Gastrocnemius medialis (tissue), 4 donors: ENCODE measurements at regions of chr3 and their contacts with region 1.

Region 1: GRCh38 chr3:111859974-111860859 is 1.2 kb downstream of the PHLDB2 start:
- DNase-seq: peak; percentile 53 to 55
- ATAC-seq: peak; percentile 80 to 82
- H3K4me3 ChIP-seq: peak overlapping the region; percentile 57 to 73 (median 66)
- H3K27ac ChIP-seq: peak overlapping the region; percentile 77 to 86 (median 81)
- H3K4me1 ChIP-seq: peaks cover 0 to 23% of the 10 kb centered on the region in 2 donors
- H3K27me3 ChIP-seq: peaks cover 25 to 46% (median 39%) of the 10 kb centered on the region in 3 donors
- CTCF ChIP-seq: peak in 4 of 5 experiments; percentile 27 to 53 (median 48)
- POLR2A ChIP-seq: peak; percentile 37 to 61

Region 2: GRCh38 chr3:111717601-111718000 is 142.6 kb before region 1 on chr3:
- in situ Hi-C with region 1: loop called in 1 of 4 experiments (anchors 10 kb)
- intact Hi-C with region 1: loop called (anchors 1 kb)
- DNase-seq: peak; percentile 54 to 73
- ATAC-seq: peak; percentile 98 to 99
- H3K4me3 ChIP-seq: no peak overlapping the region
- H3K27ac ChIP-seq: no peak overlapping the region
- H3K4me1 ChIP-seq: peaks cover 0 to 3% of the 10 kb centered on the region in 2 donors
- H3K27me3 ChIP-seq: no peaks in the 10 kb centered on the region
- CTCF ChIP-seq: peak; percentile 89 to 96 (median 92)
- POLR2A ChIP-seq: no peak

Region 3: GRCh38 chr3:111723293-111724215 is 136.7 kb before region 1 on chr3:
- in situ Hi-C with region 1: loop called in 1 of 4 experiments (anchors 10 kb)
- intact Hi-C with region 1: loop called (anchors 1 kb)
- DNase-seq: no peak
- ATAC-seq: no peak
- H3K4me3 ChIP-seq: no peak overlapping the region
- H3K27ac ChIP-seq: no peak overlapping the region
- H3K4me1 ChIP-seq: no peaks in the 10 kb centered on the region
- H3K27me3 ChIP-seq: no peaks in the 10 kb centered on the region
- CTCF ChIP-seq: no peak
- POLR2A ChIP-seq: no peak

Region 4: GRCh38 chr3:111737706-111738086 is 122.5 kb before region 1 on chr3:
- in situ Hi-C with region 1: no loop called
- intact Hi-C with region 1: loop called (anchors 5 kb)
- DNase-seq: peak; percentile 59 to 64
- ATAC-seq: peak; percentile 80 to 88
- H3K4me3 ChIP-seq: no peak overlapping the region
- H3K27ac ChIP-seq: peak overlapping the region; percentile 52 to 65 (median 62)
- H3K4me1 ChIP-seq: peaks cover 23 to 32% of the 10 kb centered on the region in 2 donors
- H3K27me3 ChIP-seq: no peaks in the 10 kb centered on the region
- CTCF ChIP-seq: no peak
- POLR2A ChIP-seq: no peak

Region 5: DNA sequence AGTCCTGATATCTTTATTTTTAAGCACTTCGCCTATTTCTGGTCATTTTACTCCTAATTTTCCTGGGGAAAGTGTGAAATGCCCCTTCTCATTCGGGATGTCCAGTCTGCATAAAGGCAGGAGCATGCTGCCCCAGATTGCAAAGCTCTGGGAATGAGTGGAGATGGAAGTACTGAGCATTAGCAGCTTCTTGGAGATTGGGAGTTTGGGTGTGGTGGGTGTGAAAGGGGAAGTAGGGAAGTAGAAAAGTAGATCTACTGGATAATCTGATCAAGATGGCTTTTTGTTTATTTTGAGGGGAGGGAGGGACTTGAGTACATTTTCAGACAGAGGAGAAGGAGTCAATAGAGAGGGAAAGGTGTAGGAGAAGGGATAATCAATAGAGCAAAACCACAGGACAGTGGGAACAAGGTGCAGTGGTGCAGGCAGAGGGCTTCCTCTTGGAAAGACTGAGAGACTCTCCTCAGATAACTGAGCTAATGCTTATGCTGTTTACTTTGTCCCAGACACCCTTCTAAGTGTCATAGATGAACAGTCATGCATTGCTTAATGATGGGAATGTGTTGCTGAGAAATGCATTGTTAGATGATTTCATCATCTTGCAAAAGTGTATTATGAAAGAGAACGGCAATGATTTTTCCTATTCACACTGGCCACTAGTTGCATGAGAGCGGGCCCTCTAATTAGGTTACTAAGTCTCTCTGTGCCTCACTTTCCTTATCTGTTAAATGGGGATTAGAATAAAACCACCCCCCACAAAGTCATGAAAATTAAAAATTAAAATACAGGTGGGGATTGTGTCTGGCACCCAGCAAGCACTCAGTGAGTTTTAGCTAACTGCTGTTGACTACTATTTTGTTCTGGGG is 44.4 kb after region 1 on chr3:
- in situ Hi-C with region 1: no loop called
- intact Hi-C with region 1: loop called (anchors 5 kb)
- DNase-seq: no peak
- ATAC-seq: peak; percentile 87 to 93
- H3K4me3 ChIP-seq: no peak overlapping the region
- H3K27ac ChIP-seq: peak overlapping the region; percentile 8 to 42 (median 23)
- H3K4me1 ChIP-seq: peaks cover 0 to 3% of the 10 kb centered on the region in 2 donors
- H3K27me3 ChIP-seq: no peaks in the 10 kb centered on the region
- CTCF ChIP-seq: no peak
- POLR2A ChIP-seq: peak in 1 of 2 donors; percentile 42

Region 6: DNA sequence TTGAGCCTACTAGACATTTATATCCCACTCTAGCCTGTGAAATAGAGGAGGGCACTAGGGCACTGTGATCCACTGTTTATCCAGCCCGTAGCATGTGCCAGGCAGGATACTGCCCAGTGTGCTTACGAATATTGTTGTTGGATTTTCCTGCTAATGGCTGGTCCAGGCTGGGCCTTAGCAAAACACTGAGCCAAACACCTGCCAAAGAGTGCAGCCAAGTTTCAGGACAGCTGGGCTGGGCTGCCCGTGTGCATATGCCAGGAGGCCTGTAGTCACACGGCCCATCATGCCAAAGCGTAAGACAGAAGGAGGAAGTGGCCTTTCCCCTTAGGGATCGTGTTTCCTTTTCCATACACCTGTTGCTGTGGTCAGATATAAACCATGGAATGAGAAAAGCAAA is 64.1 kb after region 1 on chr3:
- in situ Hi-C with region 1: no loop called
- intact Hi-C with region 1: loop called (anchors 5 kb)
- DNase-seq: peak; percentile 87 to 91
- ATAC-seq: peak; percentile 97 to 99
- H3K4me3 ChIP-seq: no peak overlapping the region
- H3K27ac ChIP-seq: peak overlapping the region; percentile 62 to 72 (median 66)
- H3K4me1 ChIP-seq: peaks cover 17 to 23% of the 10 kb centered on the region in 2 donors
- H3K27me3 ChIP-seq: no peaks in the 10 kb centered on the region
- CTCF ChIP-seq: no peak
- POLR2A ChIP-seq: no peak

Region 7: DNA sequence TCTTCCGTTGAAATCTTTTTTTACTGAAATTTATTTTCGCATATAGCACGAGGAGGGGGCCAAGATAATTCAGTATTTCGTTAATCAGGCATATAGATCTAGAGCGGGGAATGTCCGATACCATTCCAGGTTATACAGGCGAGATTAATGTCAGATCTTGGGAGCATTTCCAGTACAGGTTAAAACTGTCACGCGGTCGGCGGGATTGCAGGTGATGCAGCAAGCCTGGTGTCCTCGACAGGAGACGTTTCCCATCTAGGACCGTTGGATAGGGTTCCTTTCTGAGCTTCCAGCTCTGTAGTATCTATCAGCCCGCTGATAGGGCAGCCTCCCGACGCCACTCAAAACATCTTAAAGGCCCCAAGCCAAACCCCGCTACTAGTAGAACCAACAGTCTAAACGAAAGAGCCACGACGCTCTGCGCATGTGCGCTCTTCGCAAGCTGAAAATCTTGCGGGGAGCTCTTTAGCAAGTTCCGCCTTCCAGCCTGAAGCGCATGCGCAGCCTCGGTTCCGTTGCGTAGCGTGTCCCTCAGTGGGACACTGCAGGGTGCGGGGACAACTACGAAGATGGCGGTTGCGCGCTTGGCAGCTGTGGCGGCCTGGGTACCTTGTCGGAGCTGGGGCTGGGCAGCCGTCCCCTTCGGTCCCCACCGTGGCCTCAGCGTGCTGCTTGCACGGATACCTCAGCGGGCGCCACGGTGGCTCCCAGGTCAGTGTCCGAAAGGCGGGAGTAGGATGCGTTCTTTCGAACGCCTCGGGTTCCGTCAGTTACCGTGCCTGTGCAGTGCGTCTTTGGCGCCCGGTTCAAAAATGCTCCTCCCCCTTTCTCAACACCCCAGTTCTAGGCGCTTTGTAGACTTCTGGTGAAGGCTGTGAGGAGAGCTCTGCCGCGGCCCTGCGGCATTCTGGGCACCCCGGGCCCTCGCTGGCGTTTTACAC is 118.5 kb after region 1 on chr3 and contains the start of gene ABHD10:
- in situ Hi-C with region 1: loop called in 1 of 4 experiments (anchors 10 kb)
- intact Hi-C with region 1: no loop called
- DNase-seq: peak; percentile 90 to 96
- ATAC-seq: peak; percentile 99 to 100
- H3K4me3 ChIP-seq: peak within 1 kb of the TSS; percentile 78 to 96 (median 86)
- H3K27ac ChIP-seq: peak within 1 kb of the TSS; percentile 76 to 88 (median 83)
- H3K4me1 ChIP-seq: peaks cover 12 to 13% of the 10 kb centered on the region in 2 donors
- H3K27me3 ChIP-seq: no peaks in the 10 kb centered on the region
- CTCF ChIP-seq: no peak
- POLR2A ChIP-seq: peak; percentile 70 to 75
- total RNA-seq, gene ABHD10: 6.3 to 13.3 (median 9.0) TPM

Region 8: DNA sequence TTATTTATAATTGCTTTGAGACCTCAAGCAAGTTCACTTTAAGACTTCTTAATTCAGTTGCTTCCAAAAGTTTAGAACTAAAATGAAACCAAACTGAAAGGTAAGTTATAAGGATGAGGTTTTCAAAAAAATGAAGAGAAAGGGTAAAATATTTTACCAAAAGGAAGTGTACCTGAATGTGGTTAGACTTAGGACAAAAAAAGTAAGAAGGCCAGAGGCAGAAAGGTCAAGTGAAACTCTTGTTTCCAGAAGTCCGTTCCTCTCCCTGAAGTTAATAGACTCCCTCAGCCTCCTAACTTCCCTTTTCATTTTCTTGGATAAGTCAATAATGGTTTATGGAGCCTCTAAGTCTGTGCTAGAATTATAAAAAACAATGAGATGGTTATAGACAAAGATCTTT is 622.5 kb after region 1 on chr3:
- in situ Hi-C with region 1: no loop called
- intact Hi-C with region 1: no loop called
- DNase-seq: no peak
- ATAC-seq: no peak
- H3K4me3 ChIP-seq: no peak overlapping the region
- H3K27ac ChIP-seq: no peak overlapping the region
- H3K4me1 ChIP-seq: no peaks in the 10 kb centered on the region
- H3K27me3 ChIP-seq: no peaks in the 10 kb centered on the region
- CTCF ChIP-seq: no peak
- POLR2A ChIP-seq: no peak